Right cardiac atrium (tissue), 5 donors: ENCODE measurements at regions of chr9 and their contacts with region 1.

Region 1: DNA sequence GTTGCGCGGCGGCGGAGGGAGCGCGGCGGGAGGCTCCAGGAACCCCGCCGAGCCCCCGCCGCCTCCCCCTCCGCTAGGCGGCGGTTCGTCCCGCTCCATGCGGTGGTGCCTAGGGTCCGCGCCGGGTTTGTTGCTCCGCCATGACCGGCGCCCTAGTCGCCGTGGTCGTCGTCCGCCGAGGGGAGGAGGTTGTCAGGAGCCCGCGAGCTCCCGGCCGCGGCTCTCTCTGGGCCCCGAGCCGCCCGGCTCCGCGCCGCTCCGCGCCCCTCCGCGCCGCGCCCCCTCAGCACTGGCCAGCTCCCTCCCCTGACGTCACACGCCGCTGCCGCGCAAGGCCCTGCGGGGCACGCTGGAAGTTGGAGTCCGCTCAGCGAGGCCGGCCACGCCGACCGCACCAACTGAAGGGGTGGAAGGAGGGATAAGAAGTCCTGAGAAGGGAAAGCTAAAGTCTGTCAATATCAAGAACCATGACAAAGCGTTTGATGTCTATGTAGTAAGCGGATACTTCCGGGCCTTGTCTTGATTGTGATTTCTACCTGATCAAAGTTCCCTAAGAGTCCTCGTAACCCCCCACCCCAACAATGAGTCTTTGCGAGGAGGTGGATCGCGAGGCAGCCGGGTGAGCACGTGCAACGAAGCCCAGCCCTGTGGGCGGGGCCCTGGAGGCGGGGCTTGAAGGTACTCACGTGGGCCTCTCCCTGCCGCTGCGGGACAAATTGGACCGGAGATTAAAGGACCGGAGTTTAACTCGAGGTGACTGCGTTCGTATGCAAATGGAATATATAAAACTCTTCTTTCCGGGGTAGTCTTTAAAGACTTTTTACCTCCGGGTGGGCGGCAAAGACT is at the start of gene NR6A1:
- DNase-seq: peak; percentile 97 to 99 (median 98)
- ATAC-seq: peak; percentile 96 to 97
- H3K4me3 ChIP-seq: peak within 1 kb of the TSS; percentile 71
- H3K27ac ChIP-seq: peak within 1 kb of the TSS; percentile 4
- H3K4me1 ChIP-seq: no peaks in the 10 kb centered on the region
- H3K27me3 ChIP-seq: peaks cover 3% of the 10 kb centered on the region
- total RNA-seq, gene NR6A1: 0.85 to 1.9 (median 0.93) TPM

Region 2: DNA sequence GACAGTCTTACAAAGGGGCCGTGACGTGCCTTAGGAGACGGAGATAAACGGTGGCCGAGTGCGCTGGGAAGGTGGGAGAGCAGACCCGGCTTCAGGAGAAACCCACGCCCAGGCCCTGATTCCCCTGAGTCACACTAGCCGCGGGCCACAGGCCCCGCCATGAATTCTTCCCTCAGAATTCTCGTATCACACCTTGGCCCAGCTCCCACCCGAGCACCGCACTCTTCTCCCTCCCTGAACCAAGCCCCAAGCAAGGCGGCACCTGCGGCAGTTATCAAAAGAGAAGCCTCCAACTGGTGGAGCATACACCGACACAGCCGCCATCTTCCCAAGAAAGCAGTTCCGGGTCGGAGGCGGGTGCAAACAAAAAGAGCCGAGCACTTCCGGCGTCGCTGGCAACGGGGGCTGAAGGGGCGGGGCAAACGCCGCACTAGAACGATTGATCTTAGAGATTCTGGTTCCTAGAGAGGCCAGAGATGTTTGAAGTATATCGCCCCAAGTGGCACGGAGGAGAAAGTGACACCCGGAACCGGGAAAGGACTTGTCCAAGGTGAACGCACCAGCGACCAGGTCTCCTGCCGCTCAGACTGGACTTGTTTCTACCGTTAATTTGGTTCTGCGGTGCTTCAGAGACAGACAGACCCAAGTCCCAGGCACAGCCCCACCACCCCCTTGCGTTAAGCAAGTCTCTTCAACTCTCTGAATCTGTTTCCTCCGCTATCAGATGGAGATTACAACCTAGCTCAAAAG is 356.0 kb before region 1 on chr9 and contains the start of gene PSMB7:
- intact Hi-C with region 1: no loop called
- DNase-seq: peak; percentile 95 to 98 (median 98)
- ATAC-seq: peak; percentile 94 to 97
- H3K4me3 ChIP-seq: peak within 1 kb of the TSS; percentile 90
- H3K27ac ChIP-seq: peak within 1 kb of the TSS; percentile 47
- H3K4me1 ChIP-seq: peaks cover 2% of the 10 kb centered on the region
- H3K27me3 ChIP-seq: no peaks in the 10 kb centered on the region
- total RNA-seq, gene PSMB7: 130 to 152 (median 137) TPM

Region 3: DNA sequence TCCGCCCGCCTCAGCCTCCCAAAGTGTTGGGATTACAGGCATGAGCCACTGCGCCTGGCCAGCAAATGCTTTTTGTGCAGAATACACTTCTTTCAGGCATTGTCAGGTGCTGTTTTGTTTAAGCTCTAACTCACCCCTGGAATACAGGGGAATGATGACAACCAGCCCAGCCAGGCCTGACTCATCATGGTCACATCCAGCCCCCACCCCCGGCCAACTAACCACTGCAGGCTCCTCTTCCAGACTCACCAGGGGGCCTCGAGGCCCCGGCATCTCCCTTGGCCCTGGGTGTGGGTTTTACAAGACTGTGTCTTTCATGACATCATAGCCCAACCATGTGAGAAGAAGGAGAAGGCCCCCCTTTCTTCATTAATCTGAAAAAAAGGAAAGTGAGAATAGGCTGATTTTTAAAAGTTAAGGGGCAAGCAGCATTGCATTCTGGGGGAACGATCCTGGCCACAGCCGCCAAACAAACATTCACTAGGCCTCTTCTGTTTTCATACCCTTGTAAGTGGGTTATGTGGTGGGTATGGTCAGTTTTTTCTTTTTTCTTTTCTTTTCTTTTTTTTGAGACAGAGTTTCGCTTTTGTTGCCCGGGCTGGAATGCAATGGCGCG is 41.3 kb after region 1 on chr9:
- intact Hi-C with region 1: no loop called
- DNase-seq: peak in 2 of 3 donors; percentile 71 to 78
- ATAC-seq: peak in 1 of 2 donors; percentile 72
- H3K4me3 ChIP-seq: no peak overlapping the region
- H3K27ac ChIP-seq: peak overlapping the region; percentile 10
- H3K4me1 ChIP-seq: no peaks in the 10 kb centered on the region
- H3K27me3 ChIP-seq: no peaks in the 10 kb centered on the region

Region 4: DNA sequence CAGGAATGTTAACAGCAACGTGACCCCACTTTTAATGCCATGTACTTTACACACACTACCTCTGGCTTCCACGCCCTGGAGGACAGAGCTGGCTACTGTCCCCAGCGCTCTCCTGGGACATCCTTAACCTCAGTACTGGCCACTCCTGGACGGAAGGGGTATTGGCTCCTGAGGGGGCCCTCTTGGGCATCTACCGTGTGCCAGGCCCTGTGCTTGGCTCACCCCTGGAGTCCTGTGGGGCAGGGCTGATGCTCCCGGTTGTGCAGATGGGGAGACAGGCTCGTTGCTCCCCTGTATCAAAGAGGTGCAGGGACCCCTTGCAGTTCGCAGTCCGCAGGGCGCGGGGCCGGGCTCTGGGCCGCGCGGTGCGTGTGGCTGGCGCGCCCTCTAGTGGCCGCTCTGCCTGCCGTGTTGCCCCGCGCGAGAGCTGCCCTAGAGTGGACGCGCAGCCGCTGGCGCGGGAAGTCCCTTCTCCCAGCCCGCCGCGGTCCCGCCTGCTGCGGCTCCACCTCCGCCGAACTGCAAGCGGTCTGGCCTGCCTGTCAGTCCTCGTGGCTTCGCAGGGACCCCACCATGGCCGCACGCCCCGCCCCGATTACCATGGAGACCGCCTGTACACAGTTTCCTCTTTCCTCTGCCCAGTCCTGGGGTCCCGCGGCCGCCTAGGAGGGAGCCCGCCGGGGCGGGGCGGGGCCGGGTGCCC is 81.7 kb after region 1 on chr9 and contains the start of gene WDR38:
- intact Hi-C with region 1: loop called (anchors 1 to 2 kb)
- DNase-seq: peak; percentile 81 to 94 (median 93)
- ATAC-seq: peak; percentile 89 to 91
- H3K4me3 ChIP-seq: peak within 1 kb of the TSS; percentile 21
- H3K27ac ChIP-seq: peak within 1 kb of the TSS; percentile 73
- H3K4me1 ChIP-seq: no peaks in the 10 kb centered on the region
- H3K27me3 ChIP-seq: no peaks in the 10 kb centered on the region
- total RNA-seq, gene WDR38: not detected

Region 5: DNA sequence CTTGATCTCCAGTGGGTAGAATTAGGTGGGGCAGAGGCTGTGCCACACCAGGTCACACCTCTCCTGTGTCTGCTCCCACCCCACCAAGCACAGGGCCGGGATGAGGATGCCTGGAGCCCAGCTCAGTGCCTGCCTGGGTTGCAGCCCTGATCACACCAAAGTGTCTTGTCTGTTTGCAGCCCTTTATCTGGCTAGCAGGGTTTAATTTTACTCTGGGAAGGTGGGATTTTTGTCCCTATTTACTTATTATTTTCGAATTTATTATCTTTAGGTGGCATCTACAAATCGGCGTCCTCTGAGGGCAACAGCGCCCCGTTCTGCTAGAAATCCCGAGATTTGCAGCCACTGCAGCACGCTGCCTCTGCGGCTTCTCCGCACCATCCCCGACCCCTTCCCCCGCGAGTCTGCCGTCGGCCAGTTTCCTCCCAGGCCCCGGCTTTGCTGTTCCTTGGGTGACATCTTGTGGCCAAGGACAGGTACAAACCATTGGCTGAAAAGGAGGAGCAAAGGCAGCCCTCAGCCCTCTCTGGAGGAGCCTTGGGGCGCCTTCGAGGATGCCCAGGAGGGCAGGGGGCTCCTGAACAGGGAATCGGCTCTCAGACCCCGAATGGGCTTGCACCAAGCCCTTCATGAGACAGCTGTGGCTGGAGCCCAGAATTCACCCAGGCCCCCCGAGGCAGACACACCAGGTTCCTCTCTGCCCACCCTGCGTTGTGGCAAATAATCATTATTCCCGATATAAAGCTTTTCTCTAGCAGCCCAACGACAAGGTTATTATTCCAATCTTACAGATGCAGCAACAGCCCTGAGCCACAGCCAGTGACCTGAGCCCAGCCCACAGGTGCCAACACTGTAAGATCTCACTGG is 603.4 kb after region 1 on chr9:
- intact Hi-C with region 1: loop called in 1 of 4 experiments (anchors 5 kb)
- DNase-seq: peak; percentile 58 to 86 (median 83)
- ATAC-seq: peak; percentile 88 to 91
- H3K4me3 ChIP-seq: no peak overlapping the region
- H3K27ac ChIP-seq: no peak overlapping the region
- H3K4me1 ChIP-seq: no peaks in the 10 kb centered on the region
- H3K27me3 ChIP-seq: no peaks in the 10 kb centered on the region